ENCODE measurements at regions of chr17 and their contacts with region 1.

Region 1: GRCh38 chr17:7484067-7484918 is at the start of gene POLR2A:
- DNase-seq: peak; percentile 99
- H3K4me3 ChIP-seq: peak within 1 kb of the TSS; percentile 45 to 88 (median 76)
- H3K27ac ChIP-seq: peak within 1 kb of the TSS; percentile 100
- H3K4me1 ChIP-seq: peaks cover 28% of the 10 kb centered on the region
- H3K27me3 ChIP-seq: no peaks in the 10 kb centered on the region
- CTCF ChIP-seq: no peak
- POLR2A ChIP-seq: peak; percentile 100
- total RNA-seq, gene POLR2A: 145 and 151 TPM in 2 replicates

Region 2: DNA sequence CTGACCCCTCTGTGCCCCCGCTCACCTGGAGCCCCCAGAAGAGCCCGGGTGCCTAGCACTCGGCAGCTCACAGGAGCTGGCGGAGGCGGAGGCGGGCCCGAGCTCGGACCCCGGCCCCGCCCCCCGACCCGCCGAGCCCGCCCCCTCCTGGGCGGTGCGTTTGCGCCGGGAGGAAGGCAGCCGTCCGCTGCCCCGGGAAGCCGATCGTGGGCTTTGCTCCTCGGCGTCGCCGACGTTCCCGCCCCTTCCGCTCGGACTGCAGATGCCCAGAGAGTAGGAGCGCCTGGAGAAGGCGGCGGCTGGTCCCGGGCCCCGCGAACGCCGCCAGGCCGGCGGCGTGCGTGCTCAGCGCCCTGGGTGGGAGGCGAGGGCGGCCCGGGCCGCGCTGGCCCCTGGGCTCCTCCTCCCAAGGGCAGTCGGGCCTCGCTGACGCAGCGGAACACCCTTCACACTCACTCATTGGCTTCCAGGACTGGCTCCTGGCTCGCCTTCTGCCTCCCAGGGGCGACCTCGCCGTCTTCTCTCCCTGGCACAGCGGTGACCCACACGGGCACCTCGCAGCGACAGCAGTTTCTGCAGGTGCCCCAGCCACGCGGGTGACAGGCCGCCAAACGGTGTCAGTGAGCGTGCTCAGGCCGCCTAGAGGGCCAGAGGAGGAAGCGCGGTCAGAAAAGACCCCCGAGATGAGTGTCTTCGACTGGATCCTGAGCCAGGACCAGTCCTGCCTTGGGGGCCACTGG is 89.7 kb before region 1 on chr17 and contains the start of gene PLSCR3:
- CTCF ChIA-PET with region 1: no interaction called
- POLR2A ChIA-PET with region 1: no interaction called
- dilution Hi-C with region 1: no loop called
- intact Hi-C with region 1: loop called (anchors 2 kb)
- DNase-seq: peak; percentile 92
- H3K4me3 ChIP-seq: peak within 1 kb of the TSS; percentile 58 to 93 (median 92)
- H3K27ac ChIP-seq: peak within 1 kb of the TSS; percentile 45
- H3K4me1 ChIP-seq: peaks cover 16% of the 10 kb centered on the region
- H3K27me3 ChIP-seq: no peaks in the 10 kb centered on the region
- CTCF ChIP-seq: peak in 1 of 2 donors; percentile 55
- POLR2A ChIP-seq: peak; percentile 90
- total RNA-seq, gene PLSCR3: 54.5 and 59.9 TPM in 2 replicates

Region 3: GRCh38 chr17:7403977-7404736 is 80.1 kb before region 1 on chr17 and contains the start of gene TMEM256:
- CTCF ChIA-PET with region 1: interaction called, 3 read pairs
- POLR2A ChIA-PET with region 1: interaction called, 5 read pairs
- dilution Hi-C with region 1: no loop called
- intact Hi-C with region 1: loop called (anchors 1 kb)
- DNase-seq: peak; percentile 99
- H3K4me3 ChIP-seq: peak within 1 kb of the TSS; percentile 43 to 61 (median 52)
- H3K27ac ChIP-seq: peak within 1 kb of the TSS; percentile 21
- H3K4me1 ChIP-seq: peaks cover 12% of the 10 kb centered on the region
- H3K27me3 ChIP-seq: no peaks in the 10 kb centered on the region
- CTCF ChIP-seq: peak in 1 of 2 donors; percentile 2
- POLR2A ChIP-seq: peak; percentile 93
- total RNA-seq, gene TMEM256: 57.3 and 67.4 TPM in 2 replicates

Region 4: DNA sequence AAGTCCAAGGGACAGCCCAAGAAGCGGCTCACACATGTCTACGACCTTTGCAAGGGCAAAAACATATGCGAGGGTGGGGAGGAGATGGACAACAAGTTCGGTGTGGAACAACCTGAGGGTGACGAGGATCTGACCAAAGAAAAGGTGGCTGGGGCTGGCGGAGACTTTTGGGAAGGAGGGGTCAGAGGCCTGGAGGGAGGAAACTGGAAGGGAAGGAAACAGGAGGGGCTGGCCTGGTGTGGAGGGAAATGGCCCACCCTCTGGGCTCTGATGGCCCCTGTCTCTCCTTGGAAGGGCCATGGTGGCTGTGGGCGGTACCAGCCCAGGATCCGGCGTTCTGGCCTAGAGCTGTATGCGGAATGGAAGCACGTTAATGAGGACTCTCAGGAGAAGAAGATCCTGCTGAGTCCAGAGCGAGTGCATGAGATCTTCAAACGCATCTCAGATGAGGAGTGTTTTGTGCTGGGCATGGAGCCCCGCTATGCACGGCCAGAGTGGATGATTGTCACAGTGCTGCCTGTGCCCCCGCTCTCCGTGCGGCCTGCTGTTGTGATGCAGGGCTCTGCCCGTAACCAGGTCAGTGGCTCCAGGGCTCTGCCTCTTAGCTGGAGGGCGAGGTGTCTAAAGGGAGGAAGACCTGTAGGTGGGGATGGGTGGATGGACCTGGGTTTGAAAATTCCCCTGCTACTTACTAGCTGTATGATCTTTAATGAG is 12.3 kb after region 1 on chr17:
- CTCF ChIA-PET with region 1: interaction called, 7 read pairs
- POLR2A ChIA-PET with region 1: interaction called, 7 read pairs
- dilution Hi-C with region 1: no loop called
- intact Hi-C with region 1: loop called (anchors 1 kb)
- DNase-seq: peak; percentile 19
- H3K4me3 ChIP-seq: no peak overlapping the region
- H3K27ac ChIP-seq: peak overlapping the region; percentile 51
- H3K4me1 ChIP-seq: peaks cover 23% of the 10 kb centered on the region
- H3K27me3 ChIP-seq: no peaks in the 10 kb centered on the region
- CTCF ChIP-seq: no peak
- POLR2A ChIP-seq: no peak

Region 5: GRCh38 chr17:7572588-7573323 is 88.5 kb after region 1 on chr17:
- CTCF ChIA-PET with region 1: no interaction called
- POLR2A ChIA-PET with region 1: interaction called, 3 read pairs
- dilution Hi-C with region 1: no loop called
- intact Hi-C with region 1: loop called (anchors 1 kb)
- DNase-seq: peak; percentile 100
- H3K4me3 ChIP-seq: peak overlapping the region; percentile 86 to 96 (median 87)
- H3K27ac ChIP-seq: peak overlapping the region; percentile 91
- H3K4me1 ChIP-seq: peaks cover 43% of the 10 kb centered on the region
- H3K27me3 ChIP-seq: no peaks in the 10 kb centered on the region
- CTCF ChIP-seq: no peak
- POLR2A ChIP-seq: peak; percentile 99

Region 6: DNA sequence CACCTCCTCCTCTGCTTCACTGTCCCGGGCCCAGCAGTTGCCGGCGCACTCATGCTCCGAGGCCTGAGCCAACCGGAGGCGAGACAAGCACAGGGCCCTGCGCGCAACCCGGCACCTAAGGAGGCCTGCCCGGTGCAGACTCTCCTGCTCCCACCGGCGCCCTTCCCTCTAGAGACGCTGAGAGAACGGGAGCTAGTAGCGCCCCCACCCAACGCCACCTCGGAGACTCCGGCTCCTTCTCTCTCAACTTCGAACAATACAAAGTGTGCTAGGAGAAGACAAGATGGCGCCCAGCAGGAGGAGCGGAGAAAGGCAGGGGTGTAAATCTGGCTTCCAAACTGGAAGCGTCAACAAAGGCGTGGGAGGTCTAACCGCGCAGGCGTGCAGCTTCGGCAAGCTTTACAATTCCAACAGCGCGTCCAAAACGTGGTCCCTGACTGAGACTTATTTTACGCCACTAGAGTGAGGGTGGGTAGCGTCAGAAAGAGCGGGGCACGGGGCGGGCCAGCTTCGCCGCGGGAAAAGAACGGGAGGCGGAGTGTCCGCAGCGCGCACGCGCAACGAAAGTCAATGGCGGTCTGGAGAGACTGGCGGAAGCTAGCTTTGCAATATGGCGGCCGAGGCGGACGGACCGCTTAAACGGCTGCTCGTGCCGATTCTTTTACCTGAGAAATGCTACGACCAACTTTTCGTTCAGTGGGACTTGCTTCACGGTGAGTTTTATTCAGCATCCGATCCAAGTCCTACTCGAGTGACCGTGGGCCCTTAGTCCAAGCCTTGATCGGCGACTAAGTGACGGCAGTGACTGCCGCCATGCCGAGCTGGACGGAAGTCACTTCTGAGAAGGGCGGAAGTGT is 99.2 kb after region 1 on chr17 and contains the start of gene MPDU1:
- CTCF ChIA-PET with region 1: no interaction called
- POLR2A ChIA-PET with region 1: no interaction called
- dilution Hi-C with region 1: no loop called
- intact Hi-C with region 1: loop called (anchors 1 kb)
- DNase-seq: peak; percentile 98
- H3K4me3 ChIP-seq: peak within 1 kb of the TSS; percentile 54 to 90 (median 66)
- H3K27ac ChIP-seq: peak within 1 kb of the TSS; percentile 88
- H3K4me1 ChIP-seq: peaks cover 32% of the 10 kb centered on the region
- H3K27me3 ChIP-seq: no peaks in the 10 kb centered on the region
- CTCF ChIP-seq: no peak
- POLR2A ChIP-seq: peak; percentile 94
- total RNA-seq, gene MPDU1: 61.2 and 78.0 TPM in 2 replicates

Measured in endothelial cell of umbilical vein (primary cell).